Head of caudate nucleus (tissue), 42 donors: ENCODE measurements at regions of chr1 and their contacts with region 1.

Region 1: GRCh38 chr1:2412519-2413233 is at the start of gene PEX10:
- DNase-seq: peak; percentile 84 to 99 (median 97)

Region 2: GRCh38 chr1:2391931-2392509 is 20.7 kb before region 1 on chr1:
- intact Hi-C with region 1: loop called (anchors 2 kb)
- DNase-seq: no peak

Region 3: GRCh38 chr1:2548033-2548589 is 135.4 kb after region 1 on chr1:
- intact Hi-C with region 1: loop called (anchors 1 kb)
- DNase-seq: peak in 41 of 42 donors; percentile 74 to 93 (median 85)